SK-N-SH (cell line): ENCODE measurements at regions of chr17 and their contacts with region 1.

Region 1: GRCh38 chr17:57783106-57783742 is 38.1 kb upstream of the CCDC182 start:
- DNase-seq: peak; percentile 98
- H3K4me3 ChIP-seq: peak overlapping the region in 1 of 2 experiments; percentile 55; a peak in 2 of 4 replicates
- H3K27ac ChIP-seq: peak overlapping the region in 1 of 2 experiments; percentile 99; a peak in 2 of 4 replicates
- H3K4me1 ChIP-seq: peaks cover 0 to 40% of the 10 kb centered on the region in 2 experiments; a peak in 3 of 4 replicates
- H3K27me3 ChIP-seq: peaks cover 22% of the 10 kb centered on the region
- CTCF ChIP-seq: peak; percentile 94
- EP300 ChIP-seq: peak in 1 of 2 experiments; percentile 65; a peak in 2 of 4 replicates
- RAD21 ChIP-seq: peak; percentile 97

Region 2: GRCh38 chr17:57350277-57350676 is 432.9 kb before region 1 on chr17:
- CTCF ChIA-PET with region 1: interaction called, 10 read pairs
- POLR2A ChIA-PET with region 1: no interaction called
- DNase-seq: no peak
- H3K4me3 ChIP-seq: no peak overlapping the region
- H3K27ac ChIP-seq: peak overlapping the region in 1 of 2 experiments; percentile 90; a peak in 2 of 4 replicates
- H3K4me1 ChIP-seq: peaks cover 0 to 38% of the 10 kb centered on the region in 2 experiments; a peak in 2 of 4 replicates
- H3K27me3 ChIP-seq: no peaks in the 10 kb centered on the region
- CTCF ChIP-seq: no peak
- EP300 ChIP-seq: no peak
- RAD21 ChIP-seq: no peak

Region 3: DNA sequence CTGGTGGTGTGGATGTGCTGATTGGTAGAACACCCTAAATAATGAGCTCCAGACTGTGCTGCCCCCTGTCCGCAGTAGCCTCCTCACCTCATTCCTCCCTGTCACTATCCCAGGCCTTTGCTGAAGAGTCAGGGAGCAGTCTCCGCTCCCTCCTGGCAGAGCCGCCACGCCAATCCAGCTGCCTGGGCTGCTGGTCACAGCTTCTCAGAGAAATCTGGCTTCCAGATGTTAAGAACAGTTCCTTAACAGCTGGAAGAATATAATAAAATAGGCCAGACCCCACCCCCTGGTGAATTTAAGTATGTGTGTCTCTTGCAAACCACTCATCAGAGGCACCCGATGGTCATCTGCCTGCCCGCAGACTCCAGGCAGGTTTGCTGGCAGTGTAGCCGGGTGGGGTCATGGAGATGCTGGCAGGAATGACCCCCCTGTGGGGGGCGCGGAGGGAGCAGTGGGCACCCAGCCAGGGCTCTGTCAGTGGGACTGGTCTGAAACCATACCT is 199.1 kb before region 1 on chr17:
- CTCF ChIA-PET with region 1: interaction called, 30 read pairs
- POLR2A ChIA-PET with region 1: interaction called, 26 read pairs
- DNase-seq: peak; percentile 83
- H3K4me3 ChIP-seq: no peak overlapping the region
- H3K27ac ChIP-seq: peak overlapping the region in 1 of 2 experiments; percentile 100; a peak in 2 of 4 replicates
- H3K4me1 ChIP-seq: peaks cover 13 to 89% of the 10 kb centered on the region in 2 experiments; a peak in 3 of 4 replicates
- H3K27me3 ChIP-seq: no peaks in the 10 kb centered on the region
- CTCF ChIP-seq: no peak
- EP300 ChIP-seq: peak in 1 of 2 experiments; percentile 86; a peak in 1 of 4 replicates
- RAD21 ChIP-seq: peak; percentile 47; the same call in 1 of the 2 replicates

Region 4: GRCh38 chr17:57671667-57672632 is 111.3 kb before region 1 on chr17:
- CTCF ChIA-PET with region 1: interaction called, 70 read pairs
- POLR2A ChIA-PET with region 1: interaction called, 6 read pairs
- DNase-seq: peak; percentile 94
- H3K4me3 ChIP-seq: peak overlapping the region in 1 of 2 experiments; percentile 9; a peak in 1 of 4 replicates
- H3K27ac ChIP-seq: peak overlapping the region; percentile 5 to 100; a peak in 3 of 4 replicates
- H3K4me1 ChIP-seq: peaks cover 11 to 74% of the 10 kb centered on the region in 2 experiments; a peak in 3 of 4 replicates
- H3K27me3 ChIP-seq: no peaks in the 10 kb centered on the region
- CTCF ChIP-seq: peak; percentile 100
- EP300 ChIP-seq: peak; percentile 32 to 73; a peak in 3 of 4 replicates
- RAD21 ChIP-seq: peak; percentile 95

Region 5: DNA sequence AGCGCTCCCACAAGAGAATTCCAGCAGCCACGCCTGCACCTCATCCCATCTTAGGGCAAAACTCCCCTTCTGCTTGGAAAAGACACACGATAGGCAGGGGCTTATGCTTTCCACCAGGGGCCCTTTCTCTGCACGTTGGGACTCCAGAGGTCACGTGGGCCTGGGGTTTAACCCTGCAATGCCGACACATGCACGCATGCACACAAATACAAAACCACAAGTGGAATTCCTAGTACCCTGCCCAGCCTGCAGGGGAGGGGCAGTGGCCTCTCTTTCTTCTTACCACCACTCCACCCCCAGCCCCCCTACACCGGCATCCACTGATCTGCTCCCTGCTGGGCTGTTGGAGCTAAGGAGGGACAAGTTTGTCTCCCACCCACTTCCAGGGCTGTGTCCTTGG is 21.3 kb before region 1 on chr17:
- CTCF ChIA-PET with region 1: interaction called, 48 read pairs
- POLR2A ChIA-PET with region 1: interaction called, 19 read pairs
- DNase-seq: no peak
- H3K4me3 ChIP-seq: no peak overlapping the region
- H3K27ac ChIP-seq: 0 out of 4 replicates have a peak overlapping the region, but pooled peaks of 1 of the 2 experiments have one; percentile 67
- H3K4me1 ChIP-seq: peaks cover 0 to 39% of the 10 kb centered on the region in 2 experiments; a peak in 2 of 4 replicates
- H3K27me3 ChIP-seq: peaks cover 18% of the 10 kb centered on the region; the same call in 1 of the 2 replicates
- CTCF ChIP-seq: no peak
- EP300 ChIP-seq: no peak
- RAD21 ChIP-seq: no peak

Region 6: GRCh38 chr17:57833179-57833939 is 50.1 kb after region 1 on chr17:
- CTCF ChIA-PET with region 1: interaction called, 119 read pairs
- POLR2A ChIA-PET with region 1: interaction called, 13 read pairs
- DNase-seq: peak; percentile 77
- H3K4me3 ChIP-seq: peak overlapping the region in 1 of 2 experiments; percentile 21; a peak in 2 of 4 replicates
- H3K27ac ChIP-seq: peak overlapping the region in 1 of 2 experiments; percentile 81; a peak in 2 of 4 replicates
- H3K4me1 ChIP-seq: peaks cover 0 to 10% of the 10 kb centered on the region in 2 experiments; a peak in 1 of 4 replicates
- H3K27me3 ChIP-seq: no peaks in the 10 kb centered on the region
- CTCF ChIP-seq: peak; percentile 100
- EP300 ChIP-seq: 0 out of 4 replicates have a peak, but pooled peaks of 1 of the 2 experiments have one; percentile 20
- RAD21 ChIP-seq: peak; percentile 95

Region 7: GRCh38 chr17:57946798-57947358 is 163.7 kb after region 1 on chr17:
- CTCF ChIA-PET with region 1: no interaction called
- POLR2A ChIA-PET with region 1: no interaction called
- DNase-seq: no peak
- H3K4me3 ChIP-seq: 0 out of 4 replicates have a peak overlapping the region, but pooled peaks of 1 of the 2 experiments have one; percentile 3
- H3K27ac ChIP-seq: peak overlapping the region in 1 of 2 experiments; percentile 95; a peak in 2 of 4 replicates
- H3K4me1 ChIP-seq: peaks cover 26 to 70% of the 10 kb centered on the region in 2 experiments
- H3K27me3 ChIP-seq: no peaks in the 10 kb centered on the region
- CTCF ChIP-seq: no peak
- EP300 ChIP-seq: no peak
- RAD21 ChIP-seq: no peak